ENCODE measurements at regions of chr13 and their contacts with region 1.

Region 1: GRCh38 chr13:38686577-38687245 is at the start of gene FREM2:
- DNase-seq: no peak
- ATAC-seq: peak; percentile 61 to 82
- total RNA-seq, gene FREM2: 0.03 TPM in 1 of 2 donors, not detected in the other

Region 2: GRCh38 chr13:38763439-38764381 is 77.0 kb after region 1 on chr13:
- intact Hi-C with region 1: loop called (anchors 5 to 10 kb)
- DNase-seq: no peak
- ATAC-seq: peak in 1 of 2 donors; percentile 18

Region 3: GRCh38 chr13:38914070-38914469 is 227.4 kb after region 1 on chr13:
- intact Hi-C with region 1: loop called in 1 of 2 experiments (anchors 5 kb)
- DNase-seq: no peak
- ATAC-seq: no peak

Measured in left cardiac atrium (tissue), 4 donors.